ENCODE measurements at regions of chr16 and their contacts with region 1.

Region 1: GRCh38 chr16:17467923-17468540 is 2.7 kb downstream of the XYLT1 start:
- DNase-seq: peak; percentile 80
- H3K4me3 Mint-ChIP-seq: peak overlapping the region; percentile 10
- H3K27ac Mint-ChIP-seq: no peak overlapping the region
- H3K4me1 Mint-ChIP-seq: peaks cover 42% of the 10 kb centered on the region
- H3K27me3 Mint-ChIP-seq: peaks cover 2% of the 10 kb centered on the region

Region 2: GRCh38 chr16:16861546-16861945 is 606.5 kb before region 1 on chr16:
- CTCF ChIA-PET with region 1: interaction called, 3 read pairs
- intact Hi-C with region 1: loop called (anchors 5 kb)
- DNase-seq: peak; percentile 73
- H3K4me3 Mint-ChIP-seq: no peak overlapping the region
- H3K27ac Mint-ChIP-seq: peak overlapping the region; percentile 10
- H3K4me1 Mint-ChIP-seq: no peaks in the 10 kb centered on the region
- H3K27me3 Mint-ChIP-seq: peaks cover 8% of the 10 kb centered on the region

Region 3: DNA sequence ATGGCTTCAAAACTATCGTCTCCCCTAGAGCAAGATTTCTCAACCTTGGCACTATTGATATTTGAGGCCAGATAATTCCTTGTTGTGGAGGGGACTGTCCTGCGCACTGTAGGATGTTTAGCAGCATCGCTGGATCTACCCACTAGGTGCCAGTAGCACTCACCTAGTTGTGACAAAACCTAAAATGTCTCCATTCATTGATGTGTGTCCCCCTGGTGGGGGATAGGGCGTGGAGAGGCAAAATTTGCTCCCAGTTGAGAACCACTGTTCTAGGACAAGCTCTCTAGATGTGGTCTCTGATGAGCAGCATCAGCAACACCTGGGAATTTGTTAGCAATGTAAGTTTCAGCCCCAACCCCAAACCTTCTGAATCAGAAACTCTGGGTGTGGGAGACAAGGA is 256.2 kb before region 1 on chr16:
- CTCF ChIA-PET with region 1: no interaction called
- intact Hi-C with region 1: loop called (anchors 2 kb)
- DNase-seq: peak; percentile 54
- H3K4me3 Mint-ChIP-seq: no peak overlapping the region
- H3K27ac Mint-ChIP-seq: no peak overlapping the region
- H3K4me1 Mint-ChIP-seq: peaks cover 11% of the 10 kb centered on the region
- H3K27me3 Mint-ChIP-seq: no peaks in the 10 kb centered on the region

Region 4: GRCh38 chr16:17364319-17365210 is 103.5 kb before region 1 on chr16:
- CTCF ChIA-PET with region 1: interaction called, 8 read pairs
- intact Hi-C with region 1: loop called (anchors 5 kb)
- DNase-seq: peak; percentile 78
- H3K4me3 Mint-ChIP-seq: peak overlapping the region; percentile 55
- H3K27ac Mint-ChIP-seq: peak overlapping the region; percentile 78
- H3K4me1 Mint-ChIP-seq: peaks cover 92% of the 10 kb centered on the region
- H3K27me3 Mint-ChIP-seq: no peaks in the 10 kb centered on the region